ENCODE measurements at regions of chr2 and their contacts with region 1.

Region 1: DNA sequence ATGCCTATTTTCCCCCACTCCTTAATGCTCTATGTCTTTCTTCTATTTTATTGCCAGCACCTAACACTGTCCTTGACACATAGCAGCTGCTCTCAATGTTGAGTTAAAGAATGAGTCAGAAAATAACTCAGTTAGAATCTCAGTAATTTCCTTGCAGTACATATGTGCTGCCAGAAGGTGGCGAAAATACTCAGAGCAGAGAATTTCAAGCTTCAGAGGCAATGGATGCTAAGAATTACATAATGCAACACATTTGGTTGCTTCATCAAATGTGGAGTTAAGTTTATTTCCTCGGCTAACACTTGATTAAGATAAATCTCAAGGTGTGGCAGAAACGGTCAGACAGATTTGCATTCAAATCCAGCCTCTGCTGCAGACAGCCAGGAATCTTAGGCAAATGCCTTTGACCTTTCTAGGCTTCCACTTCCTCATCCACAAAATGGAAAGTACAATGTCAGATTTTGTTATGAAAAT is 105.6 kb downstream of the VSNL1 start:
- DNase-seq: peak; percentile 85
- ATAC-seq: peak; percentile 57
- H3K4me3 ChIP-seq: no peak overlapping the region
- H3K27ac ChIP-seq: no peak overlapping the region
- H3K4me1 ChIP-seq: peaks cover 18% of the 10 kb centered on the region
- H3K27me3 ChIP-seq: no peaks in the 10 kb centered on the region
- CTCF ChIP-seq: peak; percentile 86

Region 2: DNA sequence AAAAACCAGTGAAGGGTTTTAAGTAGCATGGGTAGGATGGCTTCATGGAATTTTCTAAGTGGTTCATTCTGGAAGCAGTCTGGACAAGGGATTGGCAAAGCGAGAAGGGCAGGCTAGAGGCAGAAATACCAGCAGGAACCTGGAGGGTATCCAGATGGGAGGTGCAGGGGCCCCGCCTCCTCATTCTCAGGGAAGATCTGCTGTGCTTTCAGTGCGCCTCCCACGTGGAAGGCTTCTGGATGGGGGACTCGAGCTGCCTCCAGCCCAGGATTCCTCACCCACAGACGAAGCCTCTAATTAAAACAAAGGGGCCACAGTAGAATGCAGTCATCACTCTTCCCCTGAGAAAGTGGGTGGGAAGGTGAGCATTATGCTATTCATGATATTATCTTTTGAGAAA is 25.8 kb before region 1 on chr2:
- CTCF ChIA-PET with region 1: no interaction called
- POLR2A ChIA-PET with region 1: no interaction called
- intact Hi-C with region 1: loop called (anchors 2 kb)
- DNase-seq: no peak
- ATAC-seq: no peak
- H3K4me3 ChIP-seq: no peak overlapping the region
- H3K27ac ChIP-seq: no peak overlapping the region
- H3K4me1 ChIP-seq: peaks cover 34% of the 10 kb centered on the region
- H3K27me3 ChIP-seq: no peaks in the 10 kb centered on the region
- CTCF ChIP-seq: no peak